Stomach (tissue), 19 donors: ENCODE measurements at regions of chr20 and their contacts with region 1.

Region 1: GRCh38 chr20:45283548-45284057 is 23.0 kb upstream of the RBPJL start:
- DNase-seq: no peak
- H3K4me3 ChIP-seq: no peak overlapping the region
- H3K27ac ChIP-seq: no peak overlapping the region
- H3K4me1 ChIP-seq: no peaks in the 10 kb centered on the region
- H3K27me3 ChIP-seq: peaks cover 0 to 44% (median 0%) of the 10 kb centered on the region in 3 donors
- CTCF ChIP-seq: no peak
- EP300 ChIP-seq: no peak
- POLR2A ChIP-seq: no peak

Region 2: GRCh38 chr20:45138561-45139300 is 144.9 kb before region 1 on chr20:
- intact Hi-C with region 1: loop called (anchors 10 kb)
- DNase-seq: peak; percentile 39 to 62
- H3K4me3 ChIP-seq: no peak overlapping the region
- H3K27ac ChIP-seq: no peak overlapping the region
- H3K4me1 ChIP-seq: peaks cover 0 to 9% (median 0%) of the 10 kb centered on the region in 4 donors
- H3K27me3 ChIP-seq: peaks cover 0 to 27% (median 0%) of the 10 kb centered on the region in 3 donors
- CTCF ChIP-seq: peak in 4 of 7 experiments; percentile 15 to 55 (median 34)
- EP300 ChIP-seq: no peak
- POLR2A ChIP-seq: no peak